ENCODE measurements at regions of chr14 and their contacts with region 1.

Region 1: GRCh38 chr14:24436355-24437019 is 6.1 kb downstream of the SDR39U1 start:
- DNase-seq: peak in 3 of 5 donors; percentile 57 to 86 (median 76)
- H3K4me3 ChIP-seq: no peak overlapping the region
- H3K27ac ChIP-seq: peak overlapping the region in 1 of 2 donors; percentile 0
- H3K4me1 ChIP-seq: peaks cover 0 to 18% (median 4%) of the 10 kb centered on the region in 3 donors
- H3K27me3 ChIP-seq: no peaks in the 10 kb centered on the region
- CTCF ChIP-seq: peak; percentile 89

Region 2: GRCh38 chr14:24279301-24280186 is 156.9 kb before region 1 on chr14:
- intact Hi-C with region 1: no loop called
- DNase-seq: no peak
- H3K4me3 ChIP-seq: no peak overlapping the region
- H3K27ac ChIP-seq: no peak overlapping the region
- H3K4me1 ChIP-seq: peaks cover 0 to 3% (median 0%) of the 10 kb centered on the region in 3 donors
- H3K27me3 ChIP-seq: no peaks in the 10 kb centered on the region
- CTCF ChIP-seq: peak; percentile 28

Region 3: GRCh38 chr14:24339284-24340151 is 97.0 kb before region 1 on chr14 and contains the start of gene RIPK3:
- intact Hi-C with region 1: loop called (anchors 5 kb)
- DNase-seq: peak in 3 of 5 donors; percentile 51 to 84 (median 63)
- H3K4me3 ChIP-seq: peak within 1 kb of the TSS; percentile 50 to 68 (median 65)
- H3K27ac ChIP-seq: no peak within 1 kb of the TSS
- H3K4me1 ChIP-seq: peaks cover 0 to 9% (median 0%) of the 10 kb centered on the region in 3 donors
- H3K27me3 ChIP-seq: no peaks in the 10 kb centered on the region
- CTCF ChIP-seq: no peak
- total RNA-seq, gene RIPK3: 19.5 TPM

Measured in kidney (tissue), 22 donors.